Caco-2 (cell line): ENCODE measurements at regions of chr12 and their contacts with region 1.

Region 1: DNA sequence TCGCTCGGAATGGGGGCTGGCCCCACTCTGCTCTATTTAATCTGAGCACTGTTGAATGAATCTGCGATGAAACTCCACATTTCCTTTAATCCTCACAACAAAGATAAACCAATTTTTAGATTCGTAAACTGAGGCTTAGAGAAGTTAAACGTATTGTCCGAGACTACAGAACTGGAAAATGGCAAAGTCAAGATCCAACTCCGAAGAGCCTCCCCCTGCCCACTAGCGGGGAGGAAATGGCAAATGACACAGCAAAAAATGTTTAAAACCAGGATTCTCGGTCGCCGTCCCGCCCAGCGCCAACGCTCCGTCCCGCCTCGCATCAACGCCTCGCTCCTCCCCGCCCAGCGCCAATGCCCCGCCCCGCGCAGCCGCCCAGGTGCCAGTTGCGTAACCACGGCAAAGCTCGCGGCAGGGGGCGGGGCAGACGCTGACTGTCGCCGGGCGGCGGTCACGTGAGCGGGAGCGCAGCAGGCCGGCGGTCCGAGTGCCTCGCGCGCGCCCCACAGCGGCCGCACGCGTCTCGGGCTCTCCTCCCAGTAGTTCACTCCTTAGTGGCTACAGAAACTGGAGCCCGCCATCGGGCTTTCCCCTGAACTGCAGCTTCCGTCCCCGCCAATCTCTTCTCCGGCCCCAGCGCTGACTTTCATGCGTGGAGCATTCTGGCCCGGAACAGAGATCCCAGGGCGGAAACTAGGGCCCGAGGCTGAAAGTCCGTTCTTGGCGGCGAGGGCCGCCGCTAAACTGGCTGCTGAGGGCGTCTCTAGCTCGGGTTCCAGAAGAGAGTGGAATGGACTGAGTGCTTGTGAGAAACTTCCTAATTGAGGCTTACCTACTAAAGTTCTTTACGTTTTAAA is 13.6 kb upstream of the LRRC23 start:
- DNase-seq: peak; percentile 98 to 100
- H3K4me3 ChIP-seq: peak overlapping the region; percentile 34
- H3K4me3 Mint-ChIP-seq: peak overlapping the region; percentile 80
- H3K27ac Mint-ChIP-seq: peak overlapping the region; percentile 96
- H3K4me1 ChIP-seq: peaks cover 37% of the 10 kb centered on the region
- H3K4me1 Mint-ChIP-seq: peaks cover 5% of the 10 kb centered on the region
- H3K27me3 ChIP-seq: no peaks in the 10 kb centered on the region
- H3K27me3 Mint-ChIP-seq: no peaks in the 10 kb centered on the region
- CTCF ChIP-seq: peak; percentile 82 to 95

Region 2: DNA sequence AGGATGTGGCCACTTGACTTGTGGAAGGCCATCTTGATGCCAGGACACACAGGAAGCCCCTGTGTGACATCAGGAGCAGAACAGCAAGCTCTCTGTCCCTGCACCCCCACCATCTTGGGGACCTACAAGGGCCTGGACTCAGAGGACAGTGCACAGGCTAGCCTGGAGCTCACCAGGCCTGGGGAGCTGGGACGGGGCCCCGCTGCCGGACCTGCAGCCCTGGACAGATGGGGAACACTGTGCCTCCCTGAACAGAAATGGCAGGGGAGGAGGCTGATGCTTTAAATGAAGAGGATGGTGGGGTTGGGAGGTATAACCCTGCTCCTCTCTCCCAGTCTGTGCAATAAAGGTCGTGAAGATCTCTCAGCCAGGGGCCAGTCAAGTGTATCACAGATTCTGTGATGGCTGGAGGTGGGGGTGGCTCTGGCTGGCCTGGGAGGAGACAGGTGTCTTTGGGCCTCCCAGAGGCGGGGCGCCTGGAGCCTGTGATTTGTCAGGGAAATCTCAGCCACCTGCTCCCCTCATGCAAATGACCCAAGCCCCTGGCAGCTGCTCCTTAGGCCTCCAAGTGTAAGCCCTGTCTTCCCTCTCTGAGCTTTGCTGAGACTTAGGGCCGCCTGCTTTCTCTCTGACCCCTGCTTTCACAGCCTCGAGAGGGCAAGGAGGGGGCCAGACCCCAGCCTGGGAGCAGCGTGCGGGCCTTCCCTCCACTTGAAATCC is 51.4 kb before region 1 on chr12:
- CTCF ChIA-PET with region 1: no interaction called
- POLR2A ChIA-PET with region 1: no interaction called
- intact Hi-C with region 1: no loop called
- DNase-seq: peak in 1 of 2 experiments; percentile 59
- H3K4me3 ChIP-seq: no peak overlapping the region
- H3K4me3 Mint-ChIP-seq: no peak overlapping the region
- H3K27ac Mint-ChIP-seq: no peak overlapping the region
- H3K4me1 ChIP-seq: peaks cover 23% of the 10 kb centered on the region
- H3K4me1 Mint-ChIP-seq: peaks cover 23% of the 10 kb centered on the region
- H3K27me3 ChIP-seq: no peaks in the 10 kb centered on the region
- H3K27me3 Mint-ChIP-seq: no peaks in the 10 kb centered on the region
- CTCF ChIP-seq: no peak

Region 3: GRCh38 chr12:6904280-6905278 is 13.6 kb after region 1 on chr12 and contains the start of gene LRRC23:
- CTCF ChIA-PET with region 1: interaction called, 10 read pairs
- POLR2A ChIA-PET with region 1: interaction called, 5 read pairs
- intact Hi-C with region 1: loop called (anchors 1 kb)
- DNase-seq: peak; percentile 98 to 99
- H3K4me3 ChIP-seq: peak within 1 kb of the TSS; percentile 64
- H3K4me3 Mint-ChIP-seq: no peak within 1 kb of the TSS
- H3K27ac Mint-ChIP-seq: no peak within 1 kb of the TSS
- H3K4me1 ChIP-seq: peaks cover 20% of the 10 kb centered on the region
- H3K4me1 Mint-ChIP-seq: peaks cover 10% of the 10 kb centered on the region
- H3K27me3 ChIP-seq: no peaks in the 10 kb centered on the region
- H3K27me3 Mint-ChIP-seq: no peaks in the 10 kb centered on the region
- CTCF ChIP-seq: no peak
- total RNA-seq, gene LRRC23: 7.8 and 8.6 TPM in 2 replicates

Region 4: DNA sequence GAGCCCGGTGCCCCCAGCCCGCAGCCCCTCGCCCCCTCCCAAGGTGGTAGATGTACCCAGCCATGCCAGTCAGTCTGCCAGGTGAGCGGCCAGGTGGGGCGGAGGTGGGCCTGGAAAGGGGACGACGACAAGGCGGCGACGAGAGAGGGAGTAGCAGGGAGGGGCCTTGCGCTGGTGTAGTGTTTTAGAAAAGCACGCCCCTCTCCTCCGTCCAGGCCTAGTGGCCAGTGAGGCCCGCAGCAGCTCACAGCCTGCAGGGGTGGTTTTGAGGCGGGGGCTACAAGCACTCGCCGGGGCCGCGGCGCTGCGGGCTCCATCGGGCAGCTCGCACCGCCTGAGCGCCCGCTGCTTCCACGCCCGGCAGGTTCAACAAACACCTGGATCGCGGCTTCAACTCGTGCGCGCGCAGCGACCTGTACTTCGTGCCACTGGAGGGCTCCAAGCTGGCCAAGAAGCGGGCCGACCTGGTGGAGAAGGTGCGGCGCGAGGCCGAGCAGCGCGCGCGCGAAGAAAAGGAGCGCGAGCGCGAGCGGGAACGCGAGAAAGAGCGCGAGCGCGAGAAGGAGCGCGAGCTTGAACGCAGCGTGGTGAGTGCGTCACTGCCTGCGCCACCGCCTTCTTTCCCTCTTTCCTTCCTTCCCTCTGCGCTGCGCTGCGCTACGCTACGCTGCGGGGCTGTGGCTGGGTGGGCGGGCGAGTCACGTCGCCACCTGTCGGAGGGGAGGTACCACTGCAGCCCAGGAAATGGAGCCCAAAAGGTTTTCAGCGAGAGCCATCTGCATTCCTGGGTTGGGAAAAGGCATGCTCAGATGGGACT is 46.7 kb after region 1 on chr12:
- CTCF ChIA-PET with region 1: interaction called, 13 read pairs
- POLR2A ChIA-PET with region 1: interaction called, 4 read pairs
- intact Hi-C with region 1: no loop called
- DNase-seq: peak; percentile 97
- H3K4me3 ChIP-seq: peak overlapping the region; percentile 55
- H3K4me3 Mint-ChIP-seq: peak overlapping the region; percentile 73
- H3K27ac Mint-ChIP-seq: peak overlapping the region; percentile 92
- H3K4me1 ChIP-seq: peaks cover 10% of the 10 kb centered on the region
- H3K4me1 Mint-ChIP-seq: peaks cover 25% of the 10 kb centered on the region
- H3K27me3 ChIP-seq: no peaks in the 10 kb centered on the region
- H3K27me3 Mint-ChIP-seq: no peaks in the 10 kb centered on the region
- CTCF ChIP-seq: peak; percentile 98 to 99

Region 5: GRCh38 chr12:7026854-7027253 is 135.8 kb after region 1 on chr12:
- CTCF ChIA-PET with region 1: no interaction called
- POLR2A ChIA-PET with region 1: no interaction called
- intact Hi-C with region 1: no loop called
- DNase-seq: no peak
- H3K4me3 ChIP-seq: no peak overlapping the region
- H3K4me3 Mint-ChIP-seq: no peak overlapping the region
- H3K27ac Mint-ChIP-seq: no peak overlapping the region
- H3K4me1 ChIP-seq: no peaks in the 10 kb centered on the region
- H3K4me1 Mint-ChIP-seq: no peaks in the 10 kb centered on the region
- H3K27me3 ChIP-seq: no peaks in the 10 kb centered on the region
- H3K27me3 Mint-ChIP-seq: no peaks in the 10 kb centered on the region
- CTCF ChIP-seq: no peak